CD4-positive, alpha-beta T cell (primary cell): ENCODE measurements at regions of chr9 and their contacts with region 1.

Region 1: DNA sequence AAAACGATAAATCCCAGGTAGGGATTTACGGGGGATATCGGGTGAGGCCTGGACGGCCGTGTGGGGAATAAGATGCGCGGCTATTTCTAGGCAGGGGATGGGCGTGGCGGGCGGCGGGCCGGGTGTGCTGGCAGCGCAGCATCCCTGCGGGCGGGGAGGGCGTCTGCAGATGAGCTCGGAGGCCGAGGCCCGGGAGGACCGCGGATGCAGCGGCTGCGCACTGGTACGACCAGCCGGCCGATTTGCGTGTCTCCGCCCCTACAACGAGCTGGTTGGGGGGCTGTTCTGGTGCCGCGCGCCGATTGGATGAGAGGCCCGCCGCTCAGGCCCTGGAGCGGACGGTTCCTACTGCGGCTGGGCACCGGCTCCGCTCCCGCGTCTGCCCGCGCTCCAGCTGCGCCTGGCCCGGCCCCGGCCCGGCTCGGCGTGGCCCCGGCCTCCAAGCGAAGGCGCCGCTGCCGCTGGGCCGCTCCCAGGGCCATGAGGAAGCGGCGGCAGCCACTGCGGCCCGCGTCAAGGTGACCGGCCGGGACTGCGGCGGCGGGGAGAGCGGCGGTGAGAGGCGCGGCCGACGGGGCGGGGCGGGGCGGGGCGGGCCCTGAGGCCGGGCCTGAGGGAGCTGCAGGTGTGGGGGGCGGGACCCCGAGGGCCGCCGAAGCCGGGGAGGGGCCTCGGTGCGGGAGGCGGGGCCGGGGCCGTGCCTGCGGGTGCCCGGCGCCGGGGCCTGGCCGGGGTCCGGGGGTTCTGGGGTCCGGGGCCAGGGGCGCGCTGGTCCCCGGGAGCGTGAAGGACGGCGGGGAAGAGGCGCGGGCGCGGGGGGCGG is at the start of gene RALGPS1:
- DNase-seq: peak; percentile 76 to 95 (median 84)
- ATAC-seq: peak; percentile 93
- H3K4me3 ChIP-seq: peak within 1 kb of the TSS; percentile 46
- H3K4me3 Mint-ChIP-seq: peak within 1 kb of the TSS; percentile 91
- H3K27ac ChIP-seq: no peak within 1 kb of the TSS
- H3K27ac Mint-ChIP-seq: no peak within 1 kb of the TSS
- H3K4me1 ChIP-seq: peaks cover 12% of the 10 kb centered on the region
- H3K4me1 Mint-ChIP-seq: peaks cover 7% of the 10 kb centered on the region
- H3K27me3 ChIP-seq: no peaks in the 10 kb centered on the region
- H3K27me3 Mint-ChIP-seq: no peaks in the 10 kb centered on the region
- CTCF ChIP-seq: no peak
- total RNA-seq, gene RALGPS1: 5.8 to 6.3 TPM

Region 2: DNA sequence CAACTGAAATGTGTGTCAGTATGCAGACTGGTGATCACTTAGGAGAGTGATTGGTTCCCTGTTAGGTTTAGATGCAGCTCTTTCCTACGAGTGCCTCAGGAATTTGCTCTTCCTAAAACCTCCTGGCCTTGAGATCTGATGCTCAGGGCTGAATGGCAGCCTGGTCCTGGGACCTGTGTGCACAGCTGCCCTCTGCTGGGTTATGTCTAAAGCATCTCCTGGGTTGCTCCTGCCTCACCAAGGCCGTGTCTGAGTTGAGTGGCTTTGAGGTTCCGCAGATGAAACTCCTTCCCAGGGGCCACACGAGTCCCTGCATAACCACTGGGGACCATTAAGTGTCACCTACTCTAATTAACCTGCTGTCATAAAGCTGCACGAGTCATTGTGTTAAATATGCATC is 528.6 kb before region 1 on chr9:
- CTCF ChIA-PET with region 1: no interaction called
- POLR2A ChIA-PET with region 1: no interaction called
- intact Hi-C with region 1: no loop called
- DNase-seq: no peak
- ATAC-seq: no peak
- H3K4me3 ChIP-seq: no peak overlapping the region
- H3K4me3 Mint-ChIP-seq: no peak overlapping the region
- H3K27ac ChIP-seq: no peak overlapping the region
- H3K27ac Mint-ChIP-seq: no peak overlapping the region
- H3K4me1 ChIP-seq: peaks cover 4% of the 10 kb centered on the region
- H3K4me1 Mint-ChIP-seq: no peaks in the 10 kb centered on the region
- H3K27me3 ChIP-seq: no peaks in the 10 kb centered on the region
- H3K27me3 Mint-ChIP-seq: no peaks in the 10 kb centered on the region
- CTCF ChIP-seq: no peak

Region 3: GRCh38 chr9:126804696-126805545 is 109.7 kb before region 1 on chr9 and contains the start of gene ZBTB43:
- CTCF ChIA-PET with region 1: no interaction called
- POLR2A ChIA-PET with region 1: no interaction called
- intact Hi-C with region 1: loop called in 1 of 2 experiments (anchors 2 kb)
- DNase-seq: peak; percentile 97 to 99 (median 98)
- ATAC-seq: peak; percentile 85
- H3K4me3 ChIP-seq: peak within 1 kb of the TSS; percentile 75
- H3K4me3 Mint-ChIP-seq: peak within 1 kb of the TSS; percentile 99
- H3K27ac ChIP-seq: peak within 1 kb of the TSS; percentile 79 to 88
- H3K27ac Mint-ChIP-seq: peak within 1 kb of the TSS; percentile 96
- H3K4me1 ChIP-seq: peaks cover 19% of the 10 kb centered on the region
- H3K4me1 Mint-ChIP-seq: peaks cover 49% of the 10 kb centered on the region
- H3K27me3 ChIP-seq: no peaks in the 10 kb centered on the region
- H3K27me3 Mint-ChIP-seq: no peaks in the 10 kb centered on the region
- CTCF ChIP-seq: no peak
- total RNA-seq, gene ZBTB43: 47.7 to 50.8 TPM

Region 4: DNA sequence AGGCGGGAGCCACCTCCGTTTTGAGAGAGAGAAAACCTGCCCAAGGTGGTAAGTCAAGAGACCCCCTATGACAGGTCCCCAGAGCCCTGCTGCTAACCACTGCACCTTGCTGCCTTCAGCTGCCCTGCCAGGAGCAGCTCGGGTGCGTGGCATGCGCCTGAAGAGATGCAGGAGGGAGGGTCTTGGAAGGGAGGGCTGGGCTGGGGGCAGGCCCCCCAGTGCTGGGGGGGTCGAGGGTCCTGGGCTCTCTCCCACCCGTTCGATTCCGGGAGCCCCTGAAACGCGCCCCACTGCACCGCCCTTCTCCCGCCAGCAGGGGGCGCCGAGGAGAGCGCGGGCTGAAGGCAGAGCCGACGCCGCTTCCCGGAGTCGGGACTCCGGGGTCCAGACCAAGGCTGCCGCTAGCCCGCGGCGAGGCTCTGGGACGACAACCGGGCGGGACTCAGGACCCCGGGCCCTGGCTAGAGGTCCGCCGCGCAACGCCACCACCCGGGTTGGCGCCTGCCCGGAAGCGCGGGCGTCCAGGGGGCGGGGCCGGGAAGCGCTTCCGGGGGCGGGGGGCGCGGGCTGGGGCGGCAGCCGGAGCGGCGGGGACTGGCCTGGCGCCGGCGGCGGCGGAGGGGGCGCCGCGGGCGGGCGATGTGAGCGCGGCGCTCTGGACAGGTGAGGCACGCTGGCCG is 54.5 kb before region 1 on chr9 and contains the start of gene ZBTB34:
- CTCF ChIA-PET with region 1: no interaction called
- POLR2A ChIA-PET with region 1: interaction called, 6 read pairs
- intact Hi-C with region 1: loop called in 1 of 2 experiments (anchors 2 kb)
- DNase-seq: peak; percentile 53 to 85 (median 72)
- ATAC-seq: peak; percentile 84
- H3K4me3 ChIP-seq: peak within 1 kb of the TSS; percentile 74
- H3K4me3 Mint-ChIP-seq: peak within 1 kb of the TSS; percentile 95
- H3K27ac ChIP-seq: peak within 1 kb of the TSS in 1 of 2 donors; percentile 22
- H3K27ac Mint-ChIP-seq: peak within 1 kb of the TSS; percentile 74
- H3K4me1 ChIP-seq: peaks cover 26% of the 10 kb centered on the region
- H3K4me1 Mint-ChIP-seq: peaks cover 31% of the 10 kb centered on the region
- H3K27me3 ChIP-seq: peaks cover 0 to 3% of the 10 kb centered on the region in 2 experiments
- H3K27me3 Mint-ChIP-seq: peaks cover 9% of the 10 kb centered on the region
- CTCF ChIP-seq: peak; percentile 100
- total RNA-seq, gene ZBTB34: 2.5 to 2.9 TPM